ENCODE measurements at regions of chr12 and their contacts with region 1.

Region 1: GRCh38 chr12:52069327-52070184 is at the start of gene ATG101:
- DNase-seq: peak; percentile 72 to 96 (median 84)
- ATAC-seq: peak; percentile 93
- H3K4me3 ChIP-seq: peak within 1 kb of the TSS; percentile 93 to 98
- H3K4me3 Mint-ChIP-seq: peak within 1 kb of the TSS; percentile 98
- H3K27ac ChIP-seq: peak within 1 kb of the TSS; percentile 87 to 96
- H3K27ac Mint-ChIP-seq: peak within 1 kb of the TSS; percentile 99
- H3K4me1 ChIP-seq: peaks cover 33% of the 10 kb centered on the region
- H3K4me1 Mint-ChIP-seq: peaks cover 47% of the 10 kb centered on the region
- H3K27me3 ChIP-seq: no peaks in the 10 kb centered on the region
- H3K27me3 Mint-ChIP-seq: no peaks in the 10 kb centered on the region
- CTCF ChIP-seq: peak; percentile 47
- total RNA-seq, gene ATG101: 19.1 to 19.3 TPM

Region 2: DNA sequence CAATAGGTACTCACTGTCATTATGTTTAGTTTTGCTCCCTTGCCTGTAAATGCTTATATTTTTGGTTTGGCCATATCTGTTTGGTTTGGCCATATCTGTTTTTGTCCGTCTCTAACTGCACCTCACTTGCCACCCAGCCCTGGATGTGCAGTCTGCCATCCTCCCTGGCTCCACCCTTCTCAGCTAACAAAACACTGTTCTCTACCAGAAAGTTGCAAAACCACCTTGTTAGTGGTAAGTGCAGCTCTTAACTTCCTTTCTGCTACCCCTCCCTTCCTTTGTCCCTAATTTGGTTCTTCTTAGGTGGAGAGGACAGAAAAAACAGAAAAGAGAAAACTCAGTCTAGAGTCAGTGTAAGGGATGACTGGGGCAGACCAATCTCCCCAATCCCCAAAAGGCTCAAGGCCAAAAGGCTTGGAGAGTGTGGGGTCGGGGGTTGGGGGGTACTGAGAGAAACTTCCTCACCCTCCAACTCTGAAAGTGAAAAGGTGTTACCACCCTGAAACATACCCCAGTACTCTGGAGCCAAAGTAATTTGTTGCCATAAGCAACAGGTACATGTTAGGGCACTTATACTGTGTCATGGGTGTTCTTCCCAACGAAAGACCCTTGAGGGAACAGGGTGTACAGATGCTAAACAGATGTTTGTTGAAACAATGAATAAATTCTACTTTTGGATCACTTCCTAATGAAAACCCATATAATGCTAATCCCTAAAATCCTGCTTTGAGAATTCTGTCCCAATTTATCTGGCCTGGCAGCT is 750.5 kb before region 1 on chr12:
- CTCF ChIA-PET with region 1: no interaction called
- POLR2A ChIA-PET with region 1: no interaction called
- intact Hi-C with region 1: loop called in 1 of 2 experiments (anchors 5 kb)
- DNase-seq: peak in 8 of 9 experiments; percentile 48 to 87 (median 67)
- ATAC-seq: peak; percentile 75
- H3K4me3 ChIP-seq: peak overlapping the region; percentile 13 to 26
- H3K4me3 Mint-ChIP-seq: peak overlapping the region; percentile 75
- H3K27ac ChIP-seq: peak overlapping the region; percentile 56 to 94
- H3K27ac Mint-ChIP-seq: peak overlapping the region; percentile 95
- H3K4me1 ChIP-seq: peaks cover 61% of the 10 kb centered on the region
- H3K4me1 Mint-ChIP-seq: peaks cover 77% of the 10 kb centered on the region
- H3K27me3 ChIP-seq: no peaks in the 10 kb centered on the region
- H3K27me3 Mint-ChIP-seq: no peaks in the 10 kb centered on the region
- CTCF ChIP-seq: no peak

Region 3: GRCh38 chr12:52032804-52033502 is 36.6 kb before region 1 on chr12:
- CTCF ChIA-PET with region 1: interaction called, 896 read pairs
- POLR2A ChIA-PET with region 1: interaction called, 16 read pairs
- intact Hi-C with region 1: loop called (anchors 1 to 2 kb)
- DNase-seq: peak; percentile 65 to 95 (median 85)
- ATAC-seq: peak; percentile 81
- H3K4me3 ChIP-seq: peak overlapping the region; percentile 38 to 56
- H3K4me3 Mint-ChIP-seq: peak overlapping the region; percentile 79
- H3K27ac ChIP-seq: peak overlapping the region; percentile 50 to 90
- H3K27ac Mint-ChIP-seq: peak overlapping the region; percentile 86
- H3K4me1 ChIP-seq: peaks cover 24% of the 10 kb centered on the region
- H3K4me1 Mint-ChIP-seq: peaks cover 31% of the 10 kb centered on the region
- H3K27me3 ChIP-seq: no peaks in the 10 kb centered on the region
- H3K27me3 Mint-ChIP-seq: no peaks in the 10 kb centered on the region
- CTCF ChIP-seq: no peak

Measured in CD8-positive, alpha-beta T cell (primary cell).